PC-3 (cell line): ENCODE measurements at regions of chr18 and their contacts with region 1.

Region 1: DNA sequence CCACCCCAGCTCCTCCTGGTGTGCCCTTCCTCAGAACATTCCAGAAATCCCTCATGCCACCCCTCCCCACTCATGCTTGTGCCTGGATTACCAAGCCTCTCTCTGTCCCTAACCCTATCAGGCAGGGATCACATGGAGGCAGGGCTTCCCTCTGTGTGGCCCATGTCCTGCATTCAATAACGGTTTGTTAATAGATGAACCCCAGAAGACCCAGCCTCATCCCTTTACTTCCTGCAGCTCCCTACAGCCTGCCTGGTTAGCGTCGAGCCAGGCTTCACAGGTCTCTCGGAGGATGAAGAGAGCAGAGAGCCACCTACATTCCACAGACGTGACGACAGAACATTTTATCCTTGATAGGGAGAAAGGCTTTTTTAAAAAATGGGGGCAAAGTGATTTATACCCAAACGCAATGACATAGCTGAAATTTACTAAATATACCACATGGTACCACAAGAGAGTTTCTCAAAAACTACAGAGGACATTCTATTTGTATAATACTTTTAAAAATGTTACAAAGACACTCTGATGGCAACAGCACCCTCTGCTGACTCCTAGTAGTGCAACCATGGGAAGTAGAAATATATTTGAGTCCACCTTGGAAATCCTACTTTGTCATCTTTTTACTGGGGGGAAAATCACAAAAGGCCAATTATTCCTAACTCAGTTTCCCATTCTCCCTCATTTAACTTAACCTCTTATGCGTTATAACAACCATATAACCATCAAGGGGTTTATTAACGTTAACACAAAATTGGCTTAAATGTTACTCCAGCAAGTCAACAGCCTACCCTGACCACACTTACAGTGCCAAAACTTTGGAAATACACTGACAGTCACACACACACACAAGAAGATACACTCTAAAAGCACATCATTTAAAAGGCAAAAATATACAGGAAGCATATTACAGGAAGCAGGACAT is 30.7 kb downstream of the FBXO15 start:
- DNase-seq: peak; percentile 60
- ATAC-seq: peak; percentile 60
- H3K4me3 ChIP-seq: no peak overlapping the region
- H3K27ac ChIP-seq: no peak overlapping the region
- H3K4me1 ChIP-seq: no peaks in the 10 kb centered on the region
- H3K27me3 ChIP-seq: 0 out of 2 replicates have a peak, but pooled peaks cover 3% of the 10 kb centered on the region
- CTCF ChIP-seq: peak; percentile 88

Region 2: DNA sequence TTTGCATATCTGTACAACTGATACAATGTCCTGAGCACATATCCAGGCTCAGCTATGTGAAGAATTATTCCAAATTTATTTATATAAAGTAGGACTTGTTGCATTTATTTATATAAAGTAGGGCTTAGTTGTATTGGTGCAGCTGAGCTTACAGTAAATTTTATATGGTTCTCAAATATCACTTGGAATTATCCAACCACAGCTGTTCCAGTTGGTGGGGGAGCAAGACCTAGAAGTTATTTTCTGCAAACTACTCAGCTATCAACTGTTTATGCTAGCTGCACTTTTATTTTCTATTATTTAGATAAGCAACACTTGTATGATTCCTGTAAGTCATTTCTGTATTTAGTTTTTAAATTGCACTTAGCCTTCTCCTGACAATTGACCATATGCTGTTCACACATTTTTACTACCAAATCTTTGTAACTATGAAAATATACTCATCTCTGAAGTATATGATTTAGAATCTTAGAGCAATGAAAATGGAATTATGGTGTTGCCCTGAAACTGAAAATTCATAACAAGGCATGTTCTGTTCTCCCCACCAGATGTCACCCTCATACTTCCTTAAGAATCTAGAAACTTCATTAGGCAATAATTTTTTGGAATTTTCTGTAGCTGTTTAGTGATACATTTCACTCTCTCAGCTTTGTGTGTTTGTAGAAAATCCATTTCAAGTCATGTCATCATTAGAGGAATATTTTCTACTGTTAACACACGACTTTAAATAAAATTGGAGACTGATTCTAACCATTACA is 1415.8 kb before region 1 on chr18:
- CTCF ChIA-PET with region 1: no interaction called
- POLR2A ChIA-PET with region 1: no interaction called
- intact Hi-C with region 1: loop called (anchors 1 kb)
- DNase-seq: peak; percentile 63
- ATAC-seq: peak; percentile 46; the same call in 1 of the 2 replicates
- H3K4me3 ChIP-seq: no peak overlapping the region
- H3K27ac ChIP-seq: no peak overlapping the region
- H3K4me1 ChIP-seq: no peaks in the 10 kb centered on the region
- H3K27me3 ChIP-seq: no peaks in the 10 kb centered on the region
- CTCF ChIP-seq: peak; percentile 77

Region 3: DNA sequence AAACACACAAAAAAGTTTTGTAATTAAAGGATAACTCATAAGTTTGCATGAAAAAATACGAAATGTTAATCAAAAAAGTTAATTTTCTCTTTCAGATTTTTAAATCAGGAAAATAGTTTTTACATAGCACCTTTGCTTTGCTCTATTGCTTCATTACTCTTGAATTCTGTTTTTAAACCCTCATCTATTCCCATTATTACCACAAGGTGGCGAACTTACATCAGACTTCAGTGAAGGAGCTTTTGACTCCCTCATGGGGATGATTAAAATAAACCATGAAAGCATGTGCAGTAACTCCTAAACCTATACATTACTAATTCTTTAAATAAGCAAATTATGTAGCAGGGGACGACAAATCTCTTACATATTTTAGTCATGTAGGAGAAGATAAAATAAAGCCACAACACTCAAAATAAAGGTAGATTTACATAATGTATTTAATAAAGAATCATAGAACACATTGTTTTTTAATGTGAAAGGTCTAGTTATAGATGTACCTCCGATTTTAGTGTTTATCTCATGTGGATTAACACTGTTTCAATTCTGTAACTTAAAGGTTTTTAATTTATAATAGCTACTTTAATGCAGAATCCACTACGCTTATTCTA is 1354.3 kb before region 1 on chr18:
- CTCF ChIA-PET with region 1: no interaction called
- POLR2A ChIA-PET with region 1: no interaction called
- intact Hi-C with region 1: loop called (anchors 1 kb)
- DNase-seq: peak; percentile 84
- ATAC-seq: peak; percentile 61
- H3K4me3 ChIP-seq: no peak overlapping the region
- H3K27ac ChIP-seq: no peak overlapping the region
- H3K4me1 ChIP-seq: no peaks in the 10 kb centered on the region
- H3K27me3 ChIP-seq: no peaks in the 10 kb centered on the region
- CTCF ChIP-seq: peak; percentile 83

Region 4: GRCh38 chr18:73147591-73147990 is 969.3 kb before region 1 on chr18:
- CTCF ChIA-PET with region 1: no interaction called
- POLR2A ChIA-PET with region 1: no interaction called
- intact Hi-C with region 1: loop called (anchors 10 kb)
- DNase-seq: no peak
- ATAC-seq: no peak
- H3K4me3 ChIP-seq: no peak overlapping the region
- H3K27ac ChIP-seq: no peak overlapping the region
- H3K4me1 ChIP-seq: no peaks in the 10 kb centered on the region
- H3K27me3 ChIP-seq: no peaks in the 10 kb centered on the region
- CTCF ChIP-seq: no peak

Region 5: DNA sequence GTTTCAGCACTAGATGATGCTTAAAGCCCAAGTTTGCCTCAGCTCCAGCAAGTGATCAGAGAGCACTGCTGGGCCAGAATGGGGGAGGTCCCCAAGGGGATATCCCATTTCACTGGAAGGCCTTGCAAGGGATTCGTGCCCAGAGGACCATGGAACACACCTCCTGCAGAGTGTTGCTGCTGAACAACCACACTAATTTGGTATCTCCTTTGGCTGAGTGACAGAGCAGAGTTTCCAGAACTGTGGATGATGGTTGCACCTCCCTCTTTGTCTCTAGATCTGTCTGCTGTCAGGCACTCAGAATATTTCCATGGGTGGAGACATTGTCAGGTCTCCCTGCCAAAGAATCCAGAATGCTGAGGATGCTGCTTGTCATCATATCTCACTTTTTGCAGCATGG is 764.3 kb before region 1 on chr18:
- CTCF ChIA-PET with region 1: no interaction called
- POLR2A ChIA-PET with region 1: no interaction called
- intact Hi-C with region 1: loop called (anchors 5 kb)
- DNase-seq: no peak
- ATAC-seq: peak; percentile 9; the same call in 1 of the 2 replicates
- H3K4me3 ChIP-seq: no peak overlapping the region
- H3K27ac ChIP-seq: no peak overlapping the region
- H3K4me1 ChIP-seq: 0 out of 2 replicates have a peak, but pooled peaks cover 5% of the 10 kb centered on the region
- H3K27me3 ChIP-seq: no peaks in the 10 kb centered on the region
- CTCF ChIP-seq: no peak

Region 6: GRCh38 chr18:73842795-73843394 is 274.0 kb before region 1 on chr18:
- CTCF ChIA-PET with region 1: no interaction called
- POLR2A ChIA-PET with region 1: no interaction called
- intact Hi-C with region 1: loop called (anchors 10 kb)
- DNase-seq: peak; percentile 71
- ATAC-seq: peak; percentile 64
- H3K4me3 ChIP-seq: peak overlapping the region; percentile 55; the same call in 1 of the 2 replicates
- H3K27ac ChIP-seq: no peak overlapping the region
- H3K4me1 ChIP-seq: peaks cover 9% of the 10 kb centered on the region
- H3K27me3 ChIP-seq: no peaks in the 10 kb centered on the region
- CTCF ChIP-seq: peak; percentile 90

Region 7: GRCh38 chr18:74040459-74041332 is 76.2 kb before region 1 on chr18:
- CTCF ChIA-PET with region 1: no interaction called
- POLR2A ChIA-PET with region 1: no interaction called
- intact Hi-C with region 1: loop called (anchors 1 kb)
- DNase-seq: peak; percentile 52
- ATAC-seq: peak; percentile 83
- H3K4me3 ChIP-seq: no peak overlapping the region
- H3K27ac ChIP-seq: no peak overlapping the region
- H3K4me1 ChIP-seq: no peaks in the 10 kb centered on the region
- H3K27me3 ChIP-seq: no peaks in the 10 kb centered on the region
- CTCF ChIP-seq: peak; percentile 81

Region 8: DNA sequence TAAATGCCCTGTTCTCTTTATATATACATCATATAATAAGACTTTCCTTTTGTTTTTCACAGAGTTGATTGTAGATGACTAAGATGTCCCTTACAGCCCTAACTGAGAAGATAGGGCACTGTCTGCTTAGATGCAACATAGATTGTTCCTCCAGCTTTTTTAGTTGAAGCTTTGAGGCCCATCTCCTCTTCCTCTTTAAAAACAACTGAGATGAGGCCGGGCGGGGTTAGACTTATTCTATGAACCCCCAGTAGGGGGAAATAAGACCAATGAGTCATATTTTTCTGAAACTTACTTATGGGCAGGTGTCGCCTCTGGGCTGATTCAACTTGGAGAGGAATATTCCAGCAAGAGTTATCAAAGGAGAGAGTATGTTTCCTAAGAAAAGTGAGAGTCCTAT is 53.9 kb before region 1 on chr18:
- CTCF ChIA-PET with region 1: no interaction called
- POLR2A ChIA-PET with region 1: no interaction called
- intact Hi-C with region 1: no loop called
- DNase-seq: peak; percentile 11
- ATAC-seq: no peak
- H3K4me3 ChIP-seq: no peak overlapping the region
- H3K27ac ChIP-seq: no peak overlapping the region
- H3K4me1 ChIP-seq: no peaks in the 10 kb centered on the region
- H3K27me3 ChIP-seq: peaks cover 43% of the 10 kb centered on the region
- CTCF ChIP-seq: no peak